ENCODE measurements at regions of chr16 and their contacts with region 1.

Region 1: GRCh38 chr16:67993189-67994039 is 5.9 kb downstream of the DPEP2 start:
- DNase-seq: peak; percentile 62 to 77
- ATAC-seq: peak; percentile 73 to 74
- H3K4me3 ChIP-seq: peak overlapping the region; percentile 43 to 59 (median 50)
- H3K27ac ChIP-seq: peak overlapping the region; percentile 78 to 83 (median 80)
- H3K4me1 ChIP-seq: peaks cover 24 to 34% of the 10 kb centered on the region in 2 donors
- H3K27me3 ChIP-seq: no peaks in the 10 kb centered on the region
- CTCF ChIP-seq: peak; percentile 97 to 100 (median 100)
- POLR2A ChIP-seq: peak; percentile 39 to 44

Region 2: GRCh38 chr16:68005786-68006286 is 12.4 kb after region 1 on chr16:
- in situ Hi-C with region 1: no loop called
- intact Hi-C with region 1: no loop called
- DNase-seq: peak in 1 of 2 donors; percentile 45
- ATAC-seq: peak in 1 of 2 donors; percentile 47
- H3K4me3 ChIP-seq: no peak overlapping the region
- H3K27ac ChIP-seq: peak overlapping the region in 3 of 4 donors; percentile 35 to 47 (median 37)
- H3K4me1 ChIP-seq: no peaks in the 10 kb centered on the region
- H3K27me3 ChIP-seq: no peaks in the 10 kb centered on the region
- CTCF ChIP-seq: no peak
- POLR2A ChIP-seq: peak in 1 of 2 donors; percentile 31

Region 3: GRCh38 chr16:68049449-68049848 is 56.0 kb after region 1 on chr16:
- in situ Hi-C with region 1: loop called in 2 of 4 experiments (anchors 5 to 10 kb)
- intact Hi-C with region 1: no loop called
- DNase-seq: no peak
- ATAC-seq: no peak
- H3K4me3 ChIP-seq: no peak overlapping the region
- H3K27ac ChIP-seq: no peak overlapping the region
- H3K4me1 ChIP-seq: no peaks in the 10 kb centered on the region
- H3K27me3 ChIP-seq: no peaks in the 10 kb centered on the region
- CTCF ChIP-seq: no peak
- POLR2A ChIP-seq: no peak

Region 4: DNA sequence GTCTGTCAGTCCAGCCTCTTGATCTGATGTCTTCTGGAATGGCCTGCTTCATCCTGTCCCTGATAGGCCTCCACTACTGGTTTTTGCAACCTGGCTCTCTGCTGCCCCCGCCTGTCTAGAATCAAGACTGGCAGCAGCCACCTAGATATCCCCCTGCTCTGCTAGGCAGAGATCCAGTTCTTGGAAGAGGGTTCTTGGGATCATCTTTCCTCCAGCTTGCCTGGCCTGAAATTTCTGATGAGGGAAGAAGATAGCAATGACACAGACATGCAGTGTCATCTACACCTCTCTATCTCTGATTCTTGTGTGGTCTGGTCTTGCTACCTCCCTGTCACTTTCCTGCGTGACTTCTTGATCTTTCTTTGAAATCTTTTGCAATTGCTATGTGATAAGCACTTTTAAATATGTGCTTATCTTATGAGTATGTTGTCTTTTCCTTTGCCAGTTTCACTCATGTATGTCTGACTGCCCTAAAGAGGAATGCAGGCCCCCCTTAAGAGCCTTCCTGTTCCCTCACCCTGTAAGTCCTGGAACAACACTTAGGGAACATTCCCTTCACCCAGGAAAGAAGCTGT is 71.5 kb after region 1 on chr16:
- in situ Hi-C with region 1: no loop called
- intact Hi-C with region 1: loop called (anchors 2 kb)
- DNase-seq: peak; percentile 83 to 91
- ATAC-seq: peak; percentile 90
- H3K4me3 ChIP-seq: no peak overlapping the region
- H3K27ac ChIP-seq: peak overlapping the region; percentile 85 to 92 (median 89)
- H3K4me1 ChIP-seq: peaks cover 40 to 50% of the 10 kb centered on the region in 2 donors
- H3K27me3 ChIP-seq: no peaks in the 10 kb centered on the region
- CTCF ChIP-seq: peak; percentile 84 to 86 (median 85)
- POLR2A ChIP-seq: no peak

Region 5: GRCh38 chr16:69386596-69386995 is 1393.2 kb after region 1 on chr16:
- in situ Hi-C with region 1: no loop called
- intact Hi-C with region 1: no loop called
- DNase-seq: no peak
- ATAC-seq: no peak
- H3K4me3 ChIP-seq: peak overlapping the region in 1 of 4 donors; percentile 82
- H3K27ac ChIP-seq: peak overlapping the region; percentile 84 to 95 (median 86)
- H3K4me1 ChIP-seq: peaks cover 8 to 12% of the 10 kb centered on the region in 2 donors
- H3K27me3 ChIP-seq: no peaks in the 10 kb centered on the region
- CTCF ChIP-seq: no peak
- POLR2A ChIP-seq: no peak